ENCODE measurements at regions of chr19 and their contacts with region 1.

Region 1: GRCh38 chr19:4007021-4007835 is at the start of gene PIAS4:
- DNase-seq: peak; percentile 97 to 98
- ATAC-seq: peak; percentile 96
- H3K4me3 ChIP-seq: peak within 1 kb of the TSS; percentile 71 to 88
- H3K27ac ChIP-seq: no peak within 1 kb of the TSS
- H3K4me1 ChIP-seq: no peaks in the 10 kb centered on the region
- H3K27me3 ChIP-seq: no peaks in the 10 kb centered on the region
- total RNA-seq, gene PIAS4: 14.9 to 20.3 TPM

Region 2: GRCh38 chr19:3970808-3971598 is 36.2 kb before region 1 on chr19 and contains the start of gene DAPK3:
- intact Hi-C with region 1: loop called in 1 of 2 experiments (anchors 2 kb)
- DNase-seq: peak; percentile 99
- ATAC-seq: peak; percentile 94
- H3K4me3 ChIP-seq: peak within 1 kb of the TSS; percentile 71 to 98
- H3K27ac ChIP-seq: peak within 1 kb of the TSS; percentile 92 to 94
- H3K4me1 ChIP-seq: no peaks in the 10 kb centered on the region
- H3K27me3 ChIP-seq: no peaks in the 10 kb centered on the region
- total RNA-seq, gene DAPK3: 118 to 197 TPM

Region 3: DNA sequence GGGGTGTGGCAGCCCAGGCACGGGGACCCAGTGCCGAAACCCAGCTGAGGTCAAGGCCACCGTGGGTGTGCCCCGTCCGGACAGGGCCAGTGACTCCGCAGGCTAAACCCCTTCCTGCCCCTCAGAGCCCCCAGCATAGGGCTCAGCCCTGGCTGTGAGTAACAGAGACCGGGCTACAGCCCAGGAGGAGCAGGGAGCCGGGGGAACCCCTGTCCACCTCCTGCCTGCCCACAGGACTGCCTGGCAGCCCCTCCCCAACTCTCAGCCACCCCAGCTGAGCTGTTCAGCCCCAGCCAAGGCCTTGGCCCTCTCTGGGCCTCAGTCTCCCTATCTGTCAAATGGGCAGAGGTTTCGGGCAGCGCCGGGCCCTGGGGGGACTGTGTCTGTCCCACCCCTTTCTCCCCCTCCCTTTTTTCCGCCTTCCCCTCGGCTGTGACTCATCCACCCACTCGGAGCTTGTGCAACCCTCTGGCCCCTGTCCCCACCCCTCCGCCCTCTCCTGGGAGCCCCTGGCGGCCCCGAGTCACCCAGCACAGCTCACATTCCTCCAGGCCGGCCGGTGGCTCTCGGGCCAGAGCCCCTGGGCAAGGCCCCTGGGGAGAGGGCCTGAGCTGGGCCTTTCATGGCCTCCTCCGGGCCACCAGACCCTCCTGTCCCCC is 50.9 kb after region 1 on chr19:
- intact Hi-C with region 1: loop called in 1 of 2 experiments (anchors 5 kb)
- DNase-seq: peak; percentile 94 to 97
- ATAC-seq: peak; percentile 87
- H3K4me3 ChIP-seq: no peak overlapping the region
- H3K27ac ChIP-seq: peak overlapping the region; percentile 57 to 70
- H3K4me1 ChIP-seq: no peaks in the 10 kb centered on the region
- H3K27me3 ChIP-seq: no peaks in the 10 kb centered on the region

Measured in aorta (tissue), 5 donors.